AG04449 (cell line): ENCODE measurements at regions of chr17 and their contacts with region 1.

Region 1: GRCh38 chr17:36148559-36149295 is 27.7 kb downstream of the TBC1D3B start:
- DNase-seq: peak; percentile 12
- H3K4me3 ChIP-seq: no peak overlapping the region
- CTCF ChIP-seq: peak; percentile 100

Region 2: GRCh38 chr17:35969558-35970380 is 179.0 kb before region 1 on chr17:
- CTCF ChIA-PET with region 1: interaction called, 82 read pairs
- POLR2A ChIA-PET with region 1: no interaction called
- DNase-seq: peak; percentile 23
- H3K4me3 ChIP-seq: no peak overlapping the region
- CTCF ChIP-seq: peak; percentile 66

Region 3: DNA sequence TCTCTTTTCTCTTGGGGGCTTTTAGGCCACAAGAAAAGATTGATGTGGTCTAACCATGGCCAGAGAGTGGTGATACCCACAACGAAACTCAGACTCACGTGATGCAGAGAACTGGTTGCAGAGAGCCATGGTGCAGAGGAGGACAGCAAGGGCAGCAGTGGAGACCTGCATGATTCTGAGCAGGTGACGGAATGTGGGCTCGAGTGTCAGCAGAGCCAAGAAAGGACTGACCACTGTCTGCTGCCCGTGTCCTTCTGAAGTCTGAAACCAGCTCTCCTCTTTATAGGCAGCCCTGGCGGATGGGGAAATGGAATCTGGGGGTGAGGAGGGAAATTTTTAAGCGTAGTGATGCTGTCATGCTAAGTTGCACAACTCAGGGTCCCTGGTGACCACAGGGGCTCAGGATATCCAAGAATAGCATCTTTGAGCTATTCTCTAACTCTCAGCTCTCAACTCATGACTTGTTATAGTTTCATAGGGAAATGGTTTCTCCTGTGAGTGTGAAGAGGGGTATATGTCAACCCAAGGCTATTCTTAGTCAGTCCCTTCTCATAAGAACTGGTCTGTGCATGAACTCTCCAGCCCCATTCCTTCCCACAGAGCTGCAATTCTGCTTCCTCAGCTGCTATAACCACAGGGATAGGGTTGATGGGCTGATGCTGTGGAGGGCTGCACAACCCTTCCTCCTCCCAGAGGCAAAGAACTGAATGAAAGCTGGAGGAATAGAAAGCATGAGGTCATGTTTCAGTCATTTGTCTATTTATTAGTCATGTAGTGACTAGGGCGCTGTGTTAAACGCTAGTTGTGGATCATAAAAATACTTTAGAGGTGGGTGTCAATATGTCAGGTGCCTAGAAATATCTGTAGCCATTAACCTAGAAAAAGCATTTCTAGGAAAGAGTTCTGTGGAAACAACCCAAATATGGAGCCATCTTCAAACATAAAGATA is 58.6 kb before region 1 on chr17 and contains the start of gene CCL3:
- CTCF ChIA-PET with region 1: no interaction called
- POLR2A ChIA-PET with region 1: no interaction called
- DNase-seq: no peak
- H3K4me3 ChIP-seq: no peak within 1 kb of the TSS
- CTCF ChIP-seq: no peak

Region 4: GRCh38 chr17:36117505-36118382 is 31.0 kb before region 1 on chr17:
- CTCF ChIA-PET with region 1: interaction called, 11 read pairs
- POLR2A ChIA-PET with region 1: no interaction called
- DNase-seq: no peak
- H3K4me3 ChIP-seq: no peak overlapping the region
- CTCF ChIP-seq: no peak

Region 5: GRCh38 chr17:36133602-36134236 is 15.0 kb before region 1 on chr17:
- CTCF ChIA-PET with region 1: interaction called, 79 read pairs
- POLR2A ChIA-PET with region 1: no interaction called
- DNase-seq: no peak
- H3K4me3 ChIP-seq: no peak overlapping the region
- CTCF ChIP-seq: no peak

Region 6: DNA sequence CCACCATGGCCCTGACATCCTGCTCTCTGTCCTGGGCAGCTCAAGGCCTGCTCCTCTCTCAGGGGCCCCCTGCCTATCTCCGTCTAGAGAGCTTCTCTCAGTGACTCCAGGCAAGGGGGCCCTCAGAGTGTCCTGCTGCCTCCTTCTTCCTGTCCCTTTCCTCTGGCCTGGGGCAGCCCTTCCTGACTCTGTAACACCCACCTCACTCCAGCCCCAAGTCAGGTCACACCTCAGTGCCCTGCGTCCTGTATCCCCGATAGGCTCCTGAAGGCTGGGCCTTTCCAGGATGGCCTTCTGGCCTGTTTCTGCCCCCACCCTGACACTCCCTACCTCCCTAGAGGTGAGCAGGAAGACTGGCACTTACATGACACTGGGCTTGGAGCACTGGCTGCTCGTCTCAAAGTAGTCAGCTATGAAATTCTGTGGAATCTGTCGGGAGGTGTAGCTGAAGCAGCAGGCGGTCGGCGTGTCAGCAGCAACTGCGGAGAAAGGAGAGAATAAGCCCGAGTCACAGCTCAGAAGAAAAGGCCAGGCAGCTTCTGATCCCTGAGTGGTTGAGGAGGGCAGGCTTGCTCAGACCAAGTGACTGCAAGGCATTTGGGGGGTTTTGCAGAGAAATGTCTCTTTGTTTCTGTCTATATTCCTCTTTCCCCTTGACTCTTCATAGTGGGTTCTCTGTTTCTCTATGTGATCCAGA is 46.9 kb after region 1 on chr17:
- CTCF ChIA-PET with region 1: interaction called, 17 read pairs
- POLR2A ChIA-PET with region 1: no interaction called
- DNase-seq: no peak
- H3K4me3 ChIP-seq: no peak overlapping the region
- CTCF ChIP-seq: no peak